ENCODE measurements at regions of chr10 and their contacts with region 1.

Region 1: GRCh38 chr10:124741281-124741921 is 2.8 kb downstream of the FAM53B start:
- DNase-seq: peak; percentile 64 to 74 (median 64)
- H3K4me3 ChIP-seq: peak overlapping the region; percentile 1 to 89 (median 5)
- H3K4me3 Mint-ChIP-seq: peak overlapping the region; percentile 99 to 100
- H3K27ac ChIP-seq: peak overlapping the region; percentile 14 to 83
- H3K27ac Mint-ChIP-seq: peak overlapping the region; percentile 86 to 96 (median 92)
- H3K4me1 ChIP-seq: peaks cover 37 to 44% of the 10 kb centered on the region in 2 donors
- H3K4me1 Mint-ChIP-seq: peaks cover 67% of the 10 kb centered on the region
- H3K27me3 ChIP-seq: no peaks in the 10 kb centered on the region
- H3K27me3 Mint-ChIP-seq: peaks cover 2% of the 10 kb centered on the region in 3 donors
- CTCF ChIP-seq: peak; percentile 92

Region 2: GRCh38 chr10:124539935-124540641 is 201.3 kb before region 1 on chr10:
- intact Hi-C with region 1: loop called in 1 of 2 experiments (anchors 1 kb)
- DNase-seq: peak; percentile 21 to 47 (median 30)
- H3K4me3 ChIP-seq: no peak overlapping the region
- H3K4me3 Mint-ChIP-seq: no peak overlapping the region
- H3K27ac ChIP-seq: no peak overlapping the region
- H3K27ac Mint-ChIP-seq: peak overlapping the region in 1 of 7 donors; percentile 57
- H3K4me1 ChIP-seq: peaks cover 16 to 17% of the 10 kb centered on the region in 2 donors
- H3K4me1 Mint-ChIP-seq: peaks cover 27% of the 10 kb centered on the region
- H3K27me3 ChIP-seq: no peaks in the 10 kb centered on the region
- H3K27me3 Mint-ChIP-seq: peaks cover 0 to 2% (median 2%) of the 10 kb centered on the region in 3 donors
- CTCF ChIP-seq: peak; percentile 77

Region 3: GRCh38 chr10:124647421-124648130 is 93.8 kb before region 1 on chr10:
- intact Hi-C with region 1: loop called (anchors 2 to 5 kb)
- DNase-seq: peak; percentile 92 to 95 (median 94)
- H3K4me3 ChIP-seq: peak overlapping the region in 2 of 3 experiments; percentile 10 to 64
- H3K4me3 Mint-ChIP-seq: peak overlapping the region; percentile 52 to 87
- H3K27ac ChIP-seq: peak overlapping the region; percentile 85 to 92
- H3K27ac Mint-ChIP-seq: peak overlapping the region; percentile 95 to 98 (median 96)
- H3K4me1 ChIP-seq: peaks cover 91 to 100% of the 10 kb centered on the region in 2 donors
- H3K4me1 Mint-ChIP-seq: peaks cover 94% of the 10 kb centered on the region
- H3K27me3 ChIP-seq: no peaks in the 10 kb centered on the region
- H3K27me3 Mint-ChIP-seq: no peaks in the 10 kb centered on the region
- CTCF ChIP-seq: peak; percentile 50

Region 4: GRCh38 chr10:124701435-124701834 is 40.0 kb before region 1 on chr10:
- intact Hi-C with region 1: loop called (anchors 5 kb)
- DNase-seq: peak; percentile 41 to 59 (median 51)
- H3K4me3 ChIP-seq: peak overlapping the region in 1 of 3 experiments; percentile 29
- H3K4me3 Mint-ChIP-seq: peak overlapping the region in 1 of 2 donors; percentile 41
- H3K27ac ChIP-seq: peak overlapping the region; percentile 85
- H3K27ac Mint-ChIP-seq: peak overlapping the region; percentile 90 to 98 (median 94)
- H3K4me1 ChIP-seq: peaks cover 61 to 66% of the 10 kb centered on the region in 2 donors
- H3K4me1 Mint-ChIP-seq: peaks cover 66% of the 10 kb centered on the region
- H3K27me3 ChIP-seq: no peaks in the 10 kb centered on the region
- H3K27me3 Mint-ChIP-seq: no peaks in the 10 kb centered on the region
- CTCF ChIP-seq: no peak